ENCODE measurements at regions of chr10 and their contacts with region 1.

Region 1: GRCh38 chr10:124092860-124093773 is at the start of gene CHST15:
- DNase-seq: peak in 4 of 10 donors; percentile 46 to 60 (median 52)
- H3K4me3 ChIP-seq: peak within 1 kb of the TSS; percentile 20 to 82 (median 67)
- H3K27ac ChIP-seq: peak within 1 kb of the TSS; percentile 8 to 94 (median 87)
- H3K27me3 ChIP-seq: peaks cover 0 to 37% (median 0%) of the 10 kb centered on the region in 45 donors
- CTCF ChIP-seq: peak in 28 of 56 donors; percentile 2 to 42 (median 18)
- total RNA-seq, gene CHST15: 24.1 to 81.5 (median 53.1) TPM

Region 2: DNA sequence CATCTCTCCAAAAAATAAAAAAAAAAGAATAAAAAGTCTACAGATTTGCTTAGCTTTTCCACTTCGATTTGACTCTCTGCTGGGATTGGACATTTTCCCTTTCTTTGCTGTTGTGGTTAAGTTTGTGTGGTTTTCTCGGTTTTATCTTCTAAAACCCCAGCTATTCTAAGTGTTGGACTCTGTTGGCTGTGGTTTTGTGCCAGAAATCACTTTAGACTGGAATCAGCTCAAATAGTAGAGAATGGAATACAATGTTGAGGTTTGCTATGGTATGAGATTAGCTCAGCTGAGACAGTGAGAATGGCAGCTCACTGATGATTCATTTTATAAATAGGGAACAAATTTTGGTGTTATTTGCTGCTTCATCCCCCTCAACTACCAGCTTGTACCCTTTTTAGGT is 822.9 kb before region 1 on chr10:
- intact Hi-C with region 1: no loop called
- DNase-seq: no peak
- H3K4me3 ChIP-seq: no peak overlapping the region
- H3K27ac ChIP-seq: no peak overlapping the region
- H3K27me3 ChIP-seq: peaks cover 0 to 14% (median 0%) of the 10 kb centered on the region in 45 donors
- CTCF ChIP-seq: no peak

Region 3: DNA sequence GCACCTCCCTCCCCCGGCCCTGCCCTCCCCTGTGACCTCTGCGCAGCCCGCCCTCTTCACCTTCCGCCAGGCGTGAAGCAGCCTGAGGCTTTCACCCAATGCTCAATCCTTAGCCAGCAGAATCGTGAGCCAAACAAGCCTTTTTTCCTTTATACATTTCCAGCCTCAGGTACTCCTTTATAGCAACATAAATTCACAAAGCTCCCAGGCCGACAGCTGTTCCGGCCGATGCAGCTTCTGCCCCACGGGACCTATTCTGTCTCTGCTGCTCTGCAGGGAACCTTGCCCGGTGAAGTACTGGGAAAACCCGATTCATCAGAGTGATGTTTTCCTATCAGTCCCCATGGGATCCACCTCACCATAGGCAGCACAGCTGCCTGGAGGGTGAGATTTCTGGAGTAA is 87.1 kb before region 1 on chr10:
- intact Hi-C with region 1: loop called in 1 of 2 experiments (anchors 5 kb)
- DNase-seq: peak in 3 of 10 donors; percentile 4 to 20 (median 16)
- H3K4me3 ChIP-seq: no peak overlapping the region
- H3K27ac ChIP-seq: peak overlapping the region in 4 of 59 donors; percentile 9 to 18 (median 15)
- H3K27me3 ChIP-seq: no peaks in the 10 kb centered on the region
- CTCF ChIP-seq: no peak

Region 4: DNA sequence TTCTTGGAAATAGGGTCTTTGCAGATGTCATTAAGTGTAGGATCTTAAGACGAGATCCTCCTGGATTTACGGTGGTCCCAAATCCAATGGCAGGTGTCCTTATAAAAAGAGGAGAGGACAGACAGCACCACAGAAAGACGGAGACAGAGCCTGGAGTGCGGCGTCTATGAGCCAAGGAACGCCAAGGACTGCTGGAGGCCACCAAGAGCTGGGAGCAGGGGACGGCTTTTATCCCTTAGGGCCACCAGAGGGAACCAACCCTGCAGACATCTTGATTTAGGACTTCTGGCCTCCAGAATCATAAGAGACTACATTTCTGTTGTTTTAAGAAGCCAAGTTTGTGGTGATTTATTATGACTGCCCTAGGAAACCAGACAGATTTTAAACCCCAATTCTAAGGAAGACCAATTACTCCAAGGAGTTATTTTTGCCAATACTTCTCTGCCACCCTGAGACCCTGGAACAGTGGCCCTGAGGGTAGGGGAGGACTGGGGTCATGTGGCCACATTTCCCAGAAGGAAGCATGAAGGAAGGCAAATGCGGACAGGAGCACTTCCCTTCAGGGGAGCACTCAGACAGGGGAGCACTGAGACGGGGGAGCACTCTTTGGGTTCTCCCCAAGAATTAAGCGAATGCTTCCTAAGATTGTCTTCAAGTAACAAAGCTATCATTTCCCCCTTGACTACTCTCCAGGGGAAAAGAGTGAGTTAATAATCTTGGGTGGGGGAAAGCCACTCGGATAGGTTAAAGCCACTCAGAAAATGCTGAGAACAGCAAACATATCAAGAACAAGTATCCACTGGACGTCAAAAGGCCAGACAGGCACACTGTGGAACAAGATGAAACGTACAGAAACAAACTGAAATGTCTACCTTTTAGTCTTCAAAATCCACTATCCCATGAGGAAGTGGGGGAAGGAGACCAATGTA is 67.2 kb before region 1 on chr10:
- intact Hi-C with region 1: loop called in 1 of 2 experiments (anchors 5 kb)
- DNase-seq: no peak
- H3K4me3 ChIP-seq: no peak overlapping the region
- H3K27ac ChIP-seq: peak overlapping the region in 4 of 59 donors; percentile 1 to 19 (median 10)
- H3K27me3 ChIP-seq: no peaks in the 10 kb centered on the region
- CTCF ChIP-seq: peak in 35 of 56 donors; percentile 6 to 45 (median 25)

Region 5: GRCh38 chr10:124194199-124194824 is 101.2 kb after region 1 on chr10:
- intact Hi-C with region 1: no loop called
- DNase-seq: no peak
- H3K4me3 ChIP-seq: no peak overlapping the region
- H3K27ac ChIP-seq: no peak overlapping the region
- H3K27me3 ChIP-seq: no peaks in the 10 kb centered on the region
- CTCF ChIP-seq: no peak

Region 6: GRCh38 chr10:124267231-124267885 is 174.2 kb after region 1 on chr10:
- intact Hi-C with region 1: no loop called
- DNase-seq: peak in 1 of 10 donors; percentile 36
- H3K4me3 ChIP-seq: no peak overlapping the region
- H3K27ac ChIP-seq: no peak overlapping the region
- H3K27me3 ChIP-seq: peaks cover 0 to 8% (median 0%) of the 10 kb centered on the region in 45 donors
- CTCF ChIP-seq: no peak

Measured in dorsolateral prefrontal cortex (tissue), 120 donors.